ENCODE measurements at regions of chr18 and their contacts with region 1.

Region 1: GRCh38 chr18:25814841-25815458 is 275.5 kb downstream of the SS18 start:
- DNase-seq: no peak
- H3K4me3 ChIP-seq: no peak overlapping the region
- H3K27ac ChIP-seq: no peak overlapping the region
- H3K4me1 ChIP-seq: peaks cover 2% of the 10 kb centered on the region
- H3K27me3 ChIP-seq: no peaks in the 10 kb centered on the region
- CTCF ChIP-seq: no peak
- EP300 ChIP-seq: no peak
- POLR2A ChIP-seq: no peak

Region 2: GRCh38 chr18:25737710-25738311 is 77.1 kb before region 1 on chr18:
- intact Hi-C with region 1: no loop called
- DNase-seq: no peak
- H3K4me3 ChIP-seq: no peak overlapping the region
- H3K27ac ChIP-seq: no peak overlapping the region
- H3K4me1 ChIP-seq: no peaks in the 10 kb centered on the region
- H3K27me3 ChIP-seq: no peaks in the 10 kb centered on the region
- CTCF ChIP-seq: no peak
- EP300 ChIP-seq: no peak
- POLR2A ChIP-seq: no peak

Region 3: GRCh38 chr18:25786758-25787157 is 28.2 kb before region 1 on chr18:
- intact Hi-C with region 1: no loop called
- DNase-seq: no peak
- H3K4me3 ChIP-seq: no peak overlapping the region
- H3K27ac ChIP-seq: no peak overlapping the region
- H3K4me1 ChIP-seq: no peaks in the 10 kb centered on the region
- H3K27me3 ChIP-seq: no peaks in the 10 kb centered on the region
- CTCF ChIP-seq: no peak
- EP300 ChIP-seq: no peak
- POLR2A ChIP-seq: no peak

Region 4: GRCh38 chr18:25875551-25876240 is 60.7 kb after region 1 on chr18:
- intact Hi-C with region 1: loop called in 1 of 4 experiments (anchors 10 kb)
- DNase-seq: no peak
- H3K4me3 ChIP-seq: no peak overlapping the region
- H3K27ac ChIP-seq: no peak overlapping the region
- H3K4me1 ChIP-seq: peaks cover 3% of the 10 kb centered on the region
- H3K27me3 ChIP-seq: no peaks in the 10 kb centered on the region
- CTCF ChIP-seq: no peak
- EP300 ChIP-seq: no peak
- POLR2A ChIP-seq: no peak

Measured in ovary (tissue), 10 donors.